MCF 10A (cell line): ENCODE measurements at regions of chr11 and their contacts with region 1.

Region 1: DNA sequence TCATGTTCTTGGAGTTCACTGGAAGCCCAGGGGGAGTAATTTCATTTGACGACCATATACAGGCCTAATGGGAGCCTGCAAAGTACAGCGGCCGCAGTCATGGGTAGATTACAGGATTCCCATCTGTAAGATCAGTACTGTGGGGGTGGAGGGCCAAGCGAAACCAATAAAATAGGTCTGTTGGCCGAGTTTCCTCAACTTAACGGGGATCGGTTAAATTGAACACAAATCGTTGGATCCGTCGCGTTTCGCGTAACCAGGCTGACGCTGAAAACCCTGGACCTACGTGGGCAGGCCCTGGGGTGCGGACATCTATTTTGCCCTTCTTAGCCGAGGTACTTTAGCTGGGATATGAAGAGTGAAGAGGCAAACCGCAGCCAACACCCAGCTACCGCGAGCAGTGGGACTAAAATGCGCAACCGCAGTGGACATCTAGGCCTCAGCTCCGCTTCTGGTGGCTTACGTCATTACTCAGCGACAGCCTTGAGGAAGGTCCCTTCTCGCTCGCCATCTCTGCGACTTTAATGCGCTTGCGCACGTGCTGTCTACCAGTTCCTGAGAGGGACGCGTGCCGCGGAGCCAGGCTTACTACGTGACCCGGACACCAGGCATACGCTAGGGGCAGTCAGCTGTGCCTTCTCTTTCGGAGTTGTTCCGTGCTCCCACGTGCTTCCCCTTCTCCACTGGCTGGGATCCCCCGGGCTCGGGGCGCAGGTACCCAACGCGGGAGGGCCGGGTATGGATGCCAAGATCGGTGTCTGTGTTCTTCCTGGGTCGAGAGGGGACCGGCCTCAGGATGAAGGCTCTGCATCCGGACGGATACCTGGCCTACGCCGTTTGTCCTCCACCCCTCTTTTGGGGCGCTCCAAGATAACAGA is at the start of gene NAT10:
- DNase-seq: peak; percentile 98
- H3K4me3 Mint-ChIP-seq: peak within 1 kb of the TSS; percentile 97
- H3K27ac Mint-ChIP-seq: peak within 1 kb of the TSS; percentile 96
- H3K4me1 Mint-ChIP-seq: peaks cover 24% of the 10 kb centered on the region
- H3K27me3 Mint-ChIP-seq: no peaks in the 10 kb centered on the region
- CTCF ChIP-seq: no peak
- total RNA-seq, gene NAT10: 68.9 and 89.5 TPM in 2 replicates

Region 2: DNA sequence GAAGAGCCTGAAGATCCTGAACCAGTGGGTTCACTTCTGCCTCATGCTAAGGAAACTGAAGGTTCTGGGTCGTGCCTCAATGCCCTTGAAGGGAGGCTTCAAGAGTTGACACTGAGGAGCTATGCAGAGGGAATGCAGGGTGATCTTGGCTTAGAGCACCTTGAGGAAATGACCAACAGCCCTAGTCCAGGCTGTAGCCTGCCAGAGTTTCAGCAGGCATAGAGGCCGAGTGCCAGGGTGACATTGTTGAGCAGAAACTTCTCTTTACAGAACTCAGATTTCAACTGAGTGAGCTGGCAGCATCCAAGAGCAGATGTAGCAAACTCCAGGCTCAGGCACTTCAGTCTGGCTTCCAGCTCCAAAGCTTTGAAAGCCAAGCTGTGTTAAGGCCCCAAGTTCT is 76.9 kb before region 1 on chr11:
- CTCF ChIA-PET with region 1: no interaction called
- POLR2A ChIA-PET with region 1: interaction called, 11 read pairs
- intact Hi-C with region 1: no loop called
- DNase-seq: no peak
- H3K4me3 Mint-ChIP-seq: no peak overlapping the region
- H3K27ac Mint-ChIP-seq: no peak overlapping the region
- H3K4me1 Mint-ChIP-seq: peaks cover 11% of the 10 kb centered on the region
- H3K27me3 Mint-ChIP-seq: no peaks in the 10 kb centered on the region
- CTCF ChIP-seq: no peak

Region 3: DNA sequence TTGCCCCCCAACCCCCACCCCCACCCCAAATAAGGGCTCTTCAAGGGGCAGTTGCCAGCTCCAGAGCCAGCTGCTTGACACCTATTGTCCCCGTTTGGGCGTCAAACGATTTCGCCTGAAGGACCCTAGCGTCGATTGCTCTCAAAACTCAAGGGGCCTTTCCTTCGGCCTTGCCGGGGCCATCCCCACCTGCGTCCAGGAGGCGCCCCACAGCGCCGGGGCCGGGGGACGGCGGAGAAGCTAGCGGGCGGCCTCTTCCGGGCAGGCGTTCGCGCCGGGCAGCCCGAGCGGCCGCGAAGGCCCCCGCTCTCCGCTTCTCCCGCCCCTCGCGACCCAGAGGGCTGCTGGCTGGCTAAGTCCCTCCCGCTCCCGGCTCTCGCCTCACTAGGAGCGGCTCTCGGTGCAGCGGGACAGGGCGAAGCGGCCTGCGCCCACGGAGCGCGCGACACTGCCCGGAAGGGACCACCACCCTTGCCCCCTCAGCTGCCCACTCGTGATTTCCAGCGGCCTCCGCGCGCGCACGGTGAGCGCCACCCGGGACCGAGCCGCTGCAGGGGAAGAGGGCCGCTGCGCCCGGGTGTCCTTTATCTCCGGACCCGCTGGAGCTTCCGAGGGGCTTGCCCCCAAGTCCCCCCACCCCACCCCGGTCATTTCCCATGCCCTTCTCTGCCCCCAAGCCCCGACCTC is 53.8 kb before region 1 on chr11 and contains the start of gene CAPRIN1:
- CTCF ChIA-PET with region 1: no interaction called
- POLR2A ChIA-PET with region 1: interaction called, 51 read pairs
- intact Hi-C with region 1: loop called (anchors 2 kb)
- DNase-seq: peak; percentile 86
- H3K4me3 Mint-ChIP-seq: peak within 1 kb of the TSS; percentile 99
- H3K27ac Mint-ChIP-seq: peak within 1 kb of the TSS; percentile 96
- H3K4me1 Mint-ChIP-seq: peaks cover 17% of the 10 kb centered on the region
- H3K27me3 Mint-ChIP-seq: no peaks in the 10 kb centered on the region
- CTCF ChIP-seq: no peak
- total RNA-seq, gene CAPRIN1: 190 and 219 TPM in 2 replicates

Region 4: DNA sequence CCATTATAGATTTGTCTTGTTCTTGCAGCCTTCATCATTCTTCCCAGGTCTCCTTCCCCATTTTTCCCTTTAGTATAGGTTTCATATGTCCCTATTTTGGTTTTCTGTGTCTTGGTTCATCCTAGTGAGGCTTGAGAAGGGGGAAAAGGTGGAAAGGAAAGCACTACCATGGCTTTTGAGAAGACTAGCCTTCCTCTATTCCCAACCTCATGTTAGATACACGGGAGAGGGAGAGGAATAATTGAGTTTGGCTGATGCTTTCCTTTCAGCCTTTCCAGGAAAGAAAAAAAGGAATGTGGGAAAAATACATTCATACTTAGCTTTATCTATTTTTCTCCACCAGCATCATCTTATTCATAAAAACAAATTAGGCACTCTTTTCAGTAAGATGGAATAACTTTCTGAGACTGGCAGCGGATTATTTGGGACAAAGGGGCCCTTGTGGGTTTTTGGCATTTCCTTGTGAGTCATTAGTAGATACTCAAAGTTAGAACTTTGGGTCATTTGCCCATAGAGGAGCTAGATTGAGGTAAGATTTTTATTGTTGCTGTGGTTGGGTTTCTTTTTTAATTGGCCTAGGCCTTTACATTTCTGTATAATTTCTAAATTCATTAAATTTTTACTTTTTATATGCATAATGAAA is 30.0 kb before region 1 on chr11:
- CTCF ChIA-PET with region 1: interaction called, 3 read pairs
- POLR2A ChIA-PET with region 1: interaction called, 24 read pairs
- intact Hi-C with region 1: no loop called
- DNase-seq: peak; percentile 63
- H3K4me3 Mint-ChIP-seq: no peak overlapping the region
- H3K27ac Mint-ChIP-seq: peak overlapping the region; percentile 69
- H3K4me1 Mint-ChIP-seq: peaks cover 20% of the 10 kb centered on the region
- H3K27me3 Mint-ChIP-seq: no peaks in the 10 kb centered on the region
- CTCF ChIP-seq: no peak

Region 5: DNA sequence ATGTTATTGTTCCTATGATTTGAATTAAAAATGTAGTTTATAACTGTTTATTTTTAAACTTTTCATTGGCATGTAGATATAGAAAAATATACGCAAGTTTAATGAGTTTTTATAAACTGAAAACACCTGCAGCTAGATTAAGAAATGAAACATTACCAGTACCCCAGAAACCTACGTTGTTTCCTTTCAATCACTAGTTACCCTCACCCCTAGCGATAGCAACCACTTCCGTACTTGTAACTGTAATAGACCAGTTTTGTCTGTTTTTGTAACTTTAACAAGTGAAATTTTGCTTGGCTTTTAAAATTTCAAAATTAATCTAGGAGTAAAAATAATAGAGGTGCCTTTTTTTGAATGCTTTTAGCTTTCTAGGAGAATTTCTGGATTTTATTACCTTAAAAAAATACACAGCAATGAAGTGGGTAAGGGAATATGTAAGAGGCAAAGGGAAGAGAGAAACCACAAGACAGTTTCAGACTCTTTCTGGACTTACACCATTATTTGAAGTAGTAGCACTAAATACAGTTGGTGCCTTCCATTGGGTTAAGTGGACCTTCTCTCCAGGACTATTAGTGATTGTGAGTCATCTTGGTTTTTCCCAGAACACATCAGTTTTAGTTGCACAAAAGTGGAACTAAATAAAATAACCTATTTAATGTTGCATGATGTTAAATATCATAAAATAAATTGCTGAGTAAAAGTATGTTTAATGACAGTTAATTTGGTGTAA is 18.6 kb before region 1 on chr11:
- CTCF ChIA-PET with region 1: interaction called, 4 read pairs
- POLR2A ChIA-PET with region 1: interaction called, 12 read pairs
- intact Hi-C with region 1: no loop called
- DNase-seq: no peak
- H3K4me3 Mint-ChIP-seq: no peak overlapping the region
- H3K27ac Mint-ChIP-seq: peak overlapping the region; percentile 41
- H3K4me1 Mint-ChIP-seq: peaks cover 6% of the 10 kb centered on the region
- H3K27me3 Mint-ChIP-seq: no peaks in the 10 kb centered on the region
- CTCF ChIP-seq: no peak

Region 6: GRCh38 chr11:34091825-34092224 is 13.5 kb before region 1 on chr11:
- CTCF ChIA-PET with region 1: interaction called, 4 read pairs
- POLR2A ChIA-PET with region 1: interaction called, 19 read pairs
- intact Hi-C with region 1: no loop called
- DNase-seq: no peak
- H3K4me3 Mint-ChIP-seq: no peak overlapping the region
- H3K27ac Mint-ChIP-seq: no peak overlapping the region
- H3K4me1 Mint-ChIP-seq: no peaks in the 10 kb centered on the region
- H3K27me3 Mint-ChIP-seq: no peaks in the 10 kb centered on the region
- CTCF ChIP-seq: no peak

Region 7: GRCh38 chr11:34165518-34166277 is 60.4 kb after region 1 on chr11:
- CTCF ChIA-PET with region 1: no interaction called
- POLR2A ChIA-PET with region 1: no interaction called
- intact Hi-C with region 1: no loop called
- DNase-seq: peak; percentile 14
- H3K4me3 Mint-ChIP-seq: no peak overlapping the region
- H3K27ac Mint-ChIP-seq: no peak overlapping the region
- H3K4me1 Mint-ChIP-seq: peaks cover 3% of the 10 kb centered on the region
- H3K27me3 Mint-ChIP-seq: no peaks in the 10 kb centered on the region
- CTCF ChIP-seq: no peak